ENCODE measurements at regions of chr5 and their contacts with region 1.

Region 1: DNA sequence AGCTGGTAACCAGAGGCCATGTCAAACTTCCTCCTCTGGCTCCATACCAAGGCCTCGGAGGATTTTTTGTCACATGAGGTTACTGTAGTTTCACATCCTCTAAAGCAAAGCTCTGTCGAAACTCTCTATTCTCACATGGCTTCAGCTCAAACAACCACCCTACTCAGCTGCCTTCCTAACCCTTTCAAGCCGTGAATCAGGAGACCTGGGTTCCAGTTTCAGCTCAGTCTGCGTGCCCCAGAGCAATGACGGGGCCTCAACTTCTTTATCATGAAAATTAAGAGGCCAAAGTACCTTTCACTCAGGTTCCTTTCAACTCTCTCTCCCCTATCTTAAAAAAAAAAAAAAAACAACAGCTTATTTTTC is 145.2 kb upstream of the MAP3K1 start:
- DNase-seq: peak; percentile 86
- H3K4me3 Mint-ChIP-seq: peak overlapping the region; percentile 13
- H3K27ac Mint-ChIP-seq: peak overlapping the region; percentile 67
- H3K4me1 Mint-ChIP-seq: peaks cover 36% of the 10 kb centered on the region
- H3K27me3 Mint-ChIP-seq: peaks cover 6% of the 10 kb centered on the region

Region 2: DNA sequence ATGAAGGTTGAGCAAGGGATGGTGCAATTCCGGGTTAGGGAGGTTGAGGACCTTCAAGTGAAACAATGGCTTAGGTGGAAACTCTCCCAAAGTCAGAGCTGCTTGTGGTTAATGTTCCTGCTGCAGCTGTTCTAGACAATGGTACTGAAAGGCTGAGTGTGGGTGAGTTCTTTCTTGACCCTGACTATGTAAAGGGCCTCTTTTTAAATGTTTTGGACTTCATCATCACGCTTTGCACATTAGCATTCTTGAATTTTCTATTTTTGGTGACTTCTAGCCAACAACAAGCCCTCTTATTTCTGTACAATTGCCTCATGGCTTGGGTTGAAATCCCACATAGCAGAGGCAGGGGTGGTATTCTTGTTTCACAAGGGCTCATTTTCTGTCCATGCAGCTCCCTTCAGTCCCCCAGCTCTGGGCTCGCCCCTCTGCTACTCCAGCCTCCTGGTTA is 300.7 kb before region 1 on chr5:
- intact Hi-C with region 1: no loop called
- DNase-seq: no peak
- H3K4me3 Mint-ChIP-seq: no peak overlapping the region
- H3K27ac Mint-ChIP-seq: no peak overlapping the region
- H3K4me1 Mint-ChIP-seq: no peaks in the 10 kb centered on the region
- H3K27me3 Mint-ChIP-seq: no peaks in the 10 kb centered on the region

Region 3: GRCh38 chr5:56625541-56625940 is 44.6 kb before region 1 on chr5:
- intact Hi-C with region 1: no loop called
- DNase-seq: no peak
- H3K4me3 Mint-ChIP-seq: no peak overlapping the region
- H3K27ac Mint-ChIP-seq: no peak overlapping the region
- H3K4me1 Mint-ChIP-seq: no peaks in the 10 kb centered on the region
- H3K27me3 Mint-ChIP-seq: peaks cover 9% of the 10 kb centered on the region

Region 4: GRCh38 chr5:56737002-56737621 is 67.0 kb after region 1 on chr5:
- intact Hi-C with region 1: loop called (anchors 10 kb)
- DNase-seq: peak; percentile 60
- H3K4me3 Mint-ChIP-seq: peak overlapping the region; percentile 32
- H3K27ac Mint-ChIP-seq: peak overlapping the region; percentile 81
- H3K4me1 Mint-ChIP-seq: peaks cover 37% of the 10 kb centered on the region
- H3K27me3 Mint-ChIP-seq: no peaks in the 10 kb centered on the region